A549 (cell line): ENCODE measurements at regions of chr1 and their contacts with region 1.

Region 1: GRCh38 chr1:93878501-93878888 is 511 bp downstream of the DNTTIP2 start:
- DNase-seq: peak; percentile 18 to 50
- ATAC-seq: peak; percentile 30 to 49
- H3K4me3 ChIP-seq: peak overlapping the region; percentile 93
- H3K27ac ChIP-seq: peak overlapping the region; percentile 93 to 96
- H3K4me1 ChIP-seq: peaks cover 37% of the 10 kb centered on the region
- CTCF ChIP-seq: no peak
- EP300 ChIP-seq: no peak
- POLR2A ChIP-seq: no peak
- RAD21 ChIP-seq: no peak

Region 2: GRCh38 chr1:93768380-93768863 is 110.1 kb before region 1 on chr1:
- CTCF ChIA-PET with region 1: no interaction called
- POLR2A ChIA-PET with region 1: no interaction called
- DNase-seq: no peak
- ATAC-seq: no peak
- H3K4me3 ChIP-seq: no peak overlapping the region
- H3K27ac ChIP-seq: peak overlapping the region in 1 of 2 experiments; percentile 26; a peak in 1 of 6 replicates
- H3K4me1 ChIP-seq: no peaks in the 10 kb centered on the region; the same call in 2 of the 3 replicates
- CTCF ChIP-seq: no peak
- EP300 ChIP-seq: no peak
- POLR2A ChIP-seq: no peak
- RAD21 ChIP-seq: no peak

Region 3: DNA sequence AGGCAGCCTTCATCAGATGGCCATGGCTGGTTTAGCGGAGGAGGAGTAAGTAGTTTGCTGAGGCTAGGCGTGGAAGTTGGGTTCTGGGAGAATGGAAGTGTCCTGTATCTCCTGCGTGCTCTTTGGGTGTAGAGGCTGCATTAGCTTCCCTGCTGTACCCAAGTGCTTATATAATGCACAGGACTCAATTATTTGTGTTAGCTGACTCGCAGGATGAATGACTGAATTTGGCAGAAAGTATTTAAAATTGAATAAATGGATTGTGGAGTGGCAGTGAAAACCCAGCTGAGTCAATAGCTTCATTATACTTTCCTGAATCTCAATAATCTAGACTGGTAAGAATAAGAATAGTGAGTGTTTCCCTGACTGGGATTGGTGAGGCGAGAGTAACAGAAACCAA is 13.2 kb before region 1 on chr1:
- CTCF ChIA-PET with region 1: interaction called, 10 read pairs
- POLR2A ChIA-PET with region 1: interaction called, 3 read pairs
- DNase-seq: no peak
- ATAC-seq: peak; percentile 29 to 35; a peak in 2 of 6 replicates
- H3K4me3 ChIP-seq: no peak overlapping the region
- H3K27ac ChIP-seq: no peak overlapping the region
- H3K4me1 ChIP-seq: no peaks in the 10 kb centered on the region
- CTCF ChIP-seq: no peak
- EP300 ChIP-seq: no peak
- POLR2A ChIP-seq: no peak
- RAD21 ChIP-seq: no peak